Ascending aorta (tissue), 2 donors: ENCODE measurements at regions of chr22 and their contacts with region 1.

Region 1: GRCh38 chr22:24805790-24806662 is at the start of gene SGSM1:
- DNase-seq: peak; percentile 21 to 91
- H3K4me3 ChIP-seq: peak within 1 kb of the TSS; percentile 71 to 74
- H3K27ac ChIP-seq: peak within 1 kb of the TSS; percentile 92 to 93
- H3K4me1 ChIP-seq: peaks cover 11 to 30% of the 10 kb centered on the region in 2 donors
- H3K27me3 ChIP-seq: no peaks in the 10 kb centered on the region
- CTCF ChIP-seq: no peak
- total RNA-seq, gene SGSM1: 4.2 TPM

Region 2: GRCh38 chr22:24768537-24769374 is 37.3 kb before region 1 on chr22:
- intact Hi-C with region 1: loop called (anchors 5 kb)
- DNase-seq: peak in 1 of 2 donors; percentile 78
- H3K4me3 ChIP-seq: no peak overlapping the region
- H3K27ac ChIP-seq: no peak overlapping the region
- H3K4me1 ChIP-seq: no peaks in the 10 kb centered on the region
- H3K27me3 ChIP-seq: no peaks in the 10 kb centered on the region
- CTCF ChIP-seq: peak; percentile 43 to 60 (median 53)

Region 3: DNA sequence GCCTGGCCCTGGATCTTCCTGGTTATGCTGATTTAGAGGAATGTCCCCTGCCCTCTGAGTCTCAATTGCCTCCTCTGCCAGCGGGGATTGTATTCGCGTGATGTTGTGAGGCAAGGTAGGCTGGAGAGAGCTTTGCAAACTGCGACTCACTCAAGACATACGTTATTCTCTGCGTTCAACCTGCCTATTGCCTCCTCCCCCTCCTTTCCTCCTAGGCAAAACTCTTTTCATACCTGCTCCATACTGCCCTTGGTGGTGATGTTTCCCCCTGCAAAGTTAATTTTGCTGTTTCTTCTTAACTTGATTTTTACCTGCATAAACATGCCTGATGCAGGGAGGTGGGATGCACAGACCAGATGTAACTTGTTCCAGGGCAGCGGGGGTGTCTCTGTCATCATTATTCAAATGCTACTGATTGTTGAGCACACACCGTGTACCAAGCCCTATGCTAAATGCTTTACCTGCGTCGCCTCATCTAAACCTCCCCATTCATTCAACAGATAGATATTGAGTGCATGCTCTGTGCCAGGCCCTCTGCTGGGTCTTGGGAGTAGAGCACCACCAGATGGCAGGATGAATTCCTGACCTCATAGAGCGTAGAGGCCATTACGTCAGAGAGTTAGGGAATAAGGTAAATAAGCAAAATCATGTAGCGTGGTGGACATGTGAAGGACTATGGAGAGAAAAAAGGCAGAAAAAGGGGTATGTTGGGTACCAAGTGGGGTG is 29.0 kb after region 1 on chr22:
- intact Hi-C with region 1: loop called (anchors 2 kb)
- DNase-seq: no peak
- H3K4me3 ChIP-seq: no peak overlapping the region
- H3K27ac ChIP-seq: no peak overlapping the region
- H3K4me1 ChIP-seq: no peaks in the 10 kb centered on the region
- H3K27me3 ChIP-seq: no peaks in the 10 kb centered on the region
- CTCF ChIP-seq: peak in 1 of 3 experiments; percentile 16

Region 4: DNA sequence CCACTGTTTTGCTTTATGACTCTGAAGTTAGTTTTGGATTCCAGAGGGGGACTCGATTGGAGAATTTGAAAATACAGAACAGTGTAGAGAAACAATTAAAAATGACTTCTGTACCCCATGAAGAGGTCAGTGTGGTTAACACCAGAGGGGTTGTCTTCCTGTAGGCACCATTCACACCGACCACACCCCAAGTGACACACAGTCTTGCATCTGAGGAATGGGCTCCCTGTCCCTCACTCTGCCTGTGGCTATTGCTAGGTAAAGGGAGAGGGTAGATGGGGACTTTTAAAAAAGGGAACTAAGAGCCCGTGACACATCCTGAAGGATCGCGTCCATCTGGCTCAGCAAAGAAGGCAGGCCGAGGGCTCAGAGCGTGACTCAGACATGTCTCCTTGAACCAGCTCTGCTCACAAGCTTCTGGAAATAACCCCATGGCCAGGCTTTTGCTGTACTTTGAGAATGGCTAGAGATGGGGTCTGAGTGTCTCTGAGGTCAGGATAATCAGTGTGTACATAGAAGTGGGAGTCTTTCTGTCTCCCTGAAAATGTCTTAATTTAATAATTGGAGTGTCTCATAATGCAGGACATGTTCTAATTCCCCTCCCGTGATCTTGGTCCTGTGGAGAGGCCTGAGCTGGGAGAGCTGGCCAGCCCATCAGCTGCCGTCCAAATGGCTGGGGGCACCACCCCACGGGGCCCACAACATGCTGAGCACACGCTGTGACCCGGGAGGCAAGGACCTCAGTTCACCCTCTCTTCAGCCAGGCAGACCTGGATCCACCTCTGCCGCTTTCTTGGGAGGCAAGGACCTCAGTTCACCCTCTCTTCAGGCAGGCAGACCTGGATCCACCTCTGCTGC is 39.2 kb after region 1 on chr22:
- intact Hi-C with region 1: loop called (anchors 2 kb)
- DNase-seq: peak in 1 of 2 donors; percentile 77
- H3K4me3 ChIP-seq: no peak overlapping the region
- H3K27ac ChIP-seq: peak overlapping the region; percentile 24 to 60
- H3K4me1 ChIP-seq: peaks cover 0 to 5% of the 10 kb centered on the region in 2 donors
- H3K27me3 ChIP-seq: no peaks in the 10 kb centered on the region
- CTCF ChIP-seq: no peak

Region 5: GRCh38 chr22:24894220-24894975 is 88.4 kb after region 1 on chr22:
- intact Hi-C with region 1: loop called (anchors 2 kb)
- DNase-seq: peak; percentile 78 to 96
- H3K4me3 ChIP-seq: peak overlapping the region; percentile 17 to 45
- H3K27ac ChIP-seq: peak overlapping the region; percentile 82 to 84
- H3K4me1 ChIP-seq: peaks cover 0 to 13% of the 10 kb centered on the region in 2 donors
- H3K27me3 ChIP-seq: no peaks in the 10 kb centered on the region
- CTCF ChIP-seq: no peak